ENCODE measurements at regions of chr5 and their contacts with region 1.

Region 1: GRCh38 chr5:133111299-133111698 is 59.5 kb downstream of the HSPA4 start:
- DNase-seq: peak; percentile 80
- H3K4me3 ChIP-seq: no peak overlapping the region
- H3K27ac ChIP-seq: no peak overlapping the region
- H3K4me1 ChIP-seq: no peaks in the 10 kb centered on the region
- H3K27me3 ChIP-seq: no peaks in the 10 kb centered on the region
- CTCF ChIP-seq: peak; percentile 85 to 91 (median 90)
- POLR2A ChIP-seq: no peak

Region 2: DNA sequence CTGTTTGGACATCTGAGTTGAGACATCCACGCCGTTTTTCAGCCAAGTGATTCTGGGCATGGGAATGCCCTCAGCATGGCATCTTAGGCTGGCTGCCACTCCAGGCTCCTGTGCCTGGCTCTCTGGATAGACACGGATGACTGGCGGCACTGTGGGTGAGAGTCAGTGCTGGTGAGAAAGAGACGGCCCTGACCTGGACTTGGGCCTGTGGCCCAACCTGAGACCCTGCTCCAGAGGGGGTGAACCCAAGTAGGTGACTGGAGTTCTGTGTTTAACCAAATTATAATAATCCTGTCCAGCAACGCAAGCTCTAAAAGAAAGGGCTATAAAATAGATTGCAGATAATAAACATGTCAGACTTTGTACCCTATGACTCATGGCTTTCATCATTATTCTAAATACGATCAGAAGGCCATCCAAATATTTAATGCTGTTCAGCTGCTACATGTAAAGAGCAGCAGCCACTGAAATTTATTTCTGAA is 114.4 kb after region 1 on chr5:
- intact Hi-C with region 1: no loop called
- DNase-seq: peak; percentile 44
- H3K4me3 ChIP-seq: no peak overlapping the region
- H3K27ac ChIP-seq: peak overlapping the region in 1 of 2 donors; percentile 24
- H3K4me1 ChIP-seq: peaks cover 3% of the 10 kb centered on the region
- H3K27me3 ChIP-seq: no peaks in the 10 kb centered on the region
- CTCF ChIP-seq: no peak
- POLR2A ChIP-seq: no peak

Region 3: GRCh38 chr5:133289686-133290367 is 178.5 kb after region 1 on chr5:
- intact Hi-C with region 1: loop called (anchors 2 kb)
- DNase-seq: peak; percentile 60
- H3K4me3 ChIP-seq: no peak overlapping the region
- H3K27ac ChIP-seq: no peak overlapping the region
- H3K4me1 ChIP-seq: no peaks in the 10 kb centered on the region
- H3K27me3 ChIP-seq: no peaks in the 10 kb centered on the region
- CTCF ChIP-seq: no peak
- POLR2A ChIP-seq: no peak

Region 4: GRCh38 chr5:133410335-133410828 is 299.1 kb after region 1 on chr5:
- intact Hi-C with region 1: loop called (anchors 10 kb)
- DNase-seq: no peak
- H3K4me3 ChIP-seq: no peak overlapping the region
- H3K27ac ChIP-seq: no peak overlapping the region
- H3K4me1 ChIP-seq: no peaks in the 10 kb centered on the region
- H3K27me3 ChIP-seq: no peaks in the 10 kb centered on the region
- CTCF ChIP-seq: no peak
- POLR2A ChIP-seq: no peak

Region 5: GRCh38 chr5:133602835-133603380 is 491.6 kb after region 1 on chr5:
- intact Hi-C with region 1: loop called (anchors 10 kb)
- DNase-seq: no peak
- H3K4me3 ChIP-seq: no peak overlapping the region
- H3K27ac ChIP-seq: no peak overlapping the region
- H3K4me1 ChIP-seq: no peaks in the 10 kb centered on the region
- H3K27me3 ChIP-seq: no peaks in the 10 kb centered on the region
- CTCF ChIP-seq: no peak
- POLR2A ChIP-seq: no peak

Region 6: GRCh38 chr5:133868946-133869518 is 757.7 kb after region 1 on chr5:
- intact Hi-C with region 1: loop called (anchors 2 kb)
- DNase-seq: peak; percentile 61
- H3K4me3 ChIP-seq: no peak overlapping the region
- H3K27ac ChIP-seq: no peak overlapping the region
- H3K4me1 ChIP-seq: peaks cover 3% of the 10 kb centered on the region
- H3K27me3 ChIP-seq: no peaks in the 10 kb centered on the region
- CTCF ChIP-seq: peak; percentile 58 to 74 (median 67)
- POLR2A ChIP-seq: no peak